ENCODE measurements at regions of chr13 and their contacts with region 1.

Region 1: DNA sequence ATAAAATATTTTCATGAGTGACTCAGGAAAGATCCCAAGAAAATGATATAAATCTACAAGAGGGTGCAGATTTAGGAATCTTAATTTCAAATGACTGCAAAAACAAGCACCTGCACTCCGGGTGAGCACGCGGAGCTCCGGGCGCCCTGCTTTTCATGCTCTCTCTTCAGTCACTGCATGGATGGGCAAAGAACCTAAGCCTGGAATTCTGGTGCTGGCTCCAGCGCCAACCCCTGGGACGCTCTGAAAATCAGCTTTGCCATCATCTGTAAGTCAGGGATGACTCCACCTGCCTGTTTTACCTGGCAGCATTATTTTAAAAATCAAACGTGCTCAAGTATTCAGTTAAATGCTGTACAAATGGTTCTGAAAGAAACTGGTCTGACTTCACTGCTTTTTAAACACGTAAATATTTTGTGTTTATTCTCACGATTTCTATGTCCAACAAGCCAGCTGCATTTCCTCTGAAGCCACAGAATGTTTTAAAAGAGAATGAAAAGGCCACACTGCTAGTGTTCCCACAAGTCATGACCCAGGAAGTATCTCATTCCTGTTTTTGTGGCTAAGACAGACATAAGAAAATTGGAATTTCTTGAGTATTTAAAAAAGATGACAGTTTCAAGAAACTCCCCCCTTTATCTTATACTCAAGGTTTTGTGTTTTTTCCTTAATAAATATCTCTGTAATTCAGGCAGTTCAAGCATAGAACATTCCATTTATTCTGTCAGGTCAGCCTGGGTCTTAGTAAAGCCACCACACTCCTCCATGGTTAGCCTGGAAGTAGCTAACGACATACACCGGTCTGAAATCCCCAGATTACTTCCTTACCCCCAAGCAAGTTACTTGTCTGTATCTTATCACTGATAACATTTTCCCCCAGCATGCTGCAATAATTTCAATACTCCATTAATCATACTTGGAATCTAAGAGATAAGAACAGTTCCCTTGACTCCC is 81.1 kb downstream of the COL4A1 start:
- DNase-seq: no peak
- ATAC-seq: no peak
- H3K4me3 ChIP-seq: no peak overlapping the region
- H3K27ac ChIP-seq: no peak overlapping the region
- H3K4me1 ChIP-seq: no peaks in the 10 kb centered on the region
- H3K27me3 ChIP-seq: no peaks in the 10 kb centered on the region
- CTCF ChIP-seq: no peak

Region 2: DNA sequence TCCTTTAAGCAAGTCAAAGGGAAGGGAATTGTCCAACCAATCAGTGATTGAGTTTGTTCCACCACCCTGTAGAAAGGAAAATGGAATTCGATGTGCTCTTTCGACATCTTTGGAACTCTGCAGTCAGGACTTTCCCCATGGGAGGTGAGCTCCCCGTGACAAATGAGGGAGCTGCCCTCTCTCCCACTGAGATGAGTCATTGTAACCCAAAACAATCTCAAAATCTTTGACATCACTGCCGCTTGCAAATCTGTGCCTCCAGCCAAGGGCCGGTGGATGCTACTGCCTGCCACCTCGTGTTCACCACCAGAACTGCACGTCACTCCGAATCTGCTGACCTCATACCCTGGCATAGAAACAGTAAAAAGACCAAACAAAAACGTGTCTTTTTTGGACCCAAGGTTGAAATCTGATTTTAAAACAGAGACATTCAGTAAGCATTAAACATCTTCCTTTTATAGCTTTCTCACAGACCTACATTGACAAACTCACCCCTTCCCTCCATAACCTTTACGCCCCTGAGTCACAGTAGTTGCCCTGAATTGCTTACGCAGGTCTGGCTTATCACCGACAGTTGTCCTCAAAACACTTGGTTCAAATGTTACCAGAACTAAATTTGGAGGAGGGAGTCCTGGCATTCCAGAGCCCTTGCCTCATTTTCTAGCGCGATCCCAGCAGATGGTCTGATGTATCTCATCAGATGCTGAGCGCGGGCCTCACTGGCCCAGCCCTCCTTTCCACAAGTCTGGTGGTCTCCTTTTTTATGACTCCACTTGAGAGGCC is 186.4 kb after region 1 on chr13:
- CTCF ChIA-PET with region 1: no interaction called
- POLR2A ChIA-PET with region 1: no interaction called
- in situ Hi-C with region 1: no loop called
- intact Hi-C with region 1: loop called (anchors 2 kb)
- DNase-seq: peak; percentile 51
- ATAC-seq: peak; percentile 85
- H3K4me3 ChIP-seq: no peak overlapping the region
- H3K27ac ChIP-seq: no peak overlapping the region
- H3K4me1 ChIP-seq: no peaks in the 10 kb centered on the region
- H3K27me3 ChIP-seq: no peaks in the 10 kb centered on the region; the same call in 1 of the 2 replicates
- CTCF ChIP-seq: peak; percentile 76

Region 3: GRCh38 chr13:110444226-110444653 is 218.4 kb after region 1 on chr13:
- CTCF ChIA-PET with region 1: interaction called, 4 read pairs
- POLR2A ChIA-PET with region 1: no interaction called
- in situ Hi-C with region 1: no loop called
- intact Hi-C with region 1: loop called (anchors 2 kb)
- DNase-seq: no peak
- ATAC-seq: peak; percentile 77
- H3K4me3 ChIP-seq: no peak overlapping the region
- H3K27ac ChIP-seq: no peak overlapping the region
- H3K4me1 ChIP-seq: no peaks in the 10 kb centered on the region
- H3K27me3 ChIP-seq: no peaks in the 10 kb centered on the region
- CTCF ChIP-seq: no peak